Esophagus squamous epithelium (tissue), 5 donors: ENCODE measurements at regions of chr15 and their contacts with region 1.

Region 1: DNA sequence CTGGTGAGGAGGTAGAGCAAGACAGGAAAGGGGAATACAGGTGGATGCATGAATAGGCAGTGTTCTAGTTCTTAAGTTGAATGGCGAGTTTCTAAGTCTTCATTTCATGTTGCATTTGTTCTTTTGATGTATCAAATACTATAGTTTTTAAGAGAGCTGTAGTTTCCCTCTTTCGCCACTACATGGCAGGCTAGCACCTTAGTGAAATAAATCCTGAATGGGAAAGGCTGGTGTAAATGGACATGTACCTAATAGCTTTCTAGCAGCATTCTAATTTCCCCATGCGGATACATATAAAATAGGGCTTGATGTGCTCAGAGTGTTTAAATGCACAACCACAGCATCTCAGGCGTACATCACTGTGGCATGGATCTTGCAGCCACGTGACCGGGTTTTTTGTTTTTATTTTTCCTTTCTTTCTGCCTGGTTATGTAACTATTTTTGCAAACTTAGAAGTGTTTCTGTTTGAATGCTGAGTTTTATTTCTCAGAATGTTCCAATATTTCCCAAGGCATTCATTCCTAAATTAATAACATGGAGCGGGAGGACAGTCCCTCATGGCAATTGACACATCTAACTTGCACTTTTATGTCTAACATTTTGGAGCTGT is 23.5 kb upstream of the CLN6 start:
- DNase-seq: no peak
- H3K4me3 ChIP-seq: no peak overlapping the region
- H3K27ac ChIP-seq: no peak overlapping the region
- H3K4me1 ChIP-seq: peaks cover 0 to 31% (median 14%) of the 10 kb centered on the region in 3 donors
- H3K27me3 ChIP-seq: no peaks in the 10 kb centered on the region
- CTCF ChIP-seq: peak; percentile 68 to 94 (median 90)
- POLR2A ChIP-seq: no peak

Region 2: DNA sequence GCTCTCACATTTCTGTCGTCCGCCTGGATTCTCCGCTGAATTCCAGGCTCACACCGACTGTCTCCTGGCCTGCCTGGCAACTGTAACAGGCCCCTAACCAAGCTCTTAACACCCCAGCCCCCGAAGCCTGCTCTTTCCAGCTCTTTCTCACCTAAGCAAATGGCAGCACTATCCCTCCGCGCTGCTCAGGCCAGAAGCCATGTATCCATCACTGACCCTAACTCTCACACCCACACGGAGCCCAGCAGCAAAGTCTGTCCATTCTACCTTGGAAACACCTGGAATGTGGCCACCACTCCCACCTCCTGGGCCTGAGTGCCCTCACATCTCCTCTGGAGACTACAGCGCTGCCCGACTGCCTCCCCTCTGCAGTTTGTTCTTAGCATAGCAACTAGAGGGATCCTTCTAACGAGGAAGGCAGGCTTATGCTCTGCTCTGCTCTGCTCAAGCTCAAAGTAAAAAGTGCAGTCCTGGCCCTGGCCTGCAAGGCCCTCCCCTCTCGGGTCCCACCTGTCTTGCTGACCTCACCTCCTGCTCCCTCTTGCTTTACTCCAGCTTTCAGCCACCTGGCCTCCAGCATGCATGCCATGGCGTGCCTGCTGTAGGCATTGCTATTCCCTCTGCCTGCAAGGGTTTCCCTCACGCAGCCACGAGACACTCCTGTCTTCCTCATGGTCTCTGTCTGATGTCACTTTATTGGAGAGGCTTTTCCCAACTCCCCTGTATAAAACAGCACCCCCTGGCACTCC is 51.7 kb after region 1 on chr15:
- intact Hi-C with region 1: loop called (anchors 5 kb)
- DNase-seq: no peak
- H3K4me3 ChIP-seq: no peak overlapping the region
- H3K27ac ChIP-seq: no peak overlapping the region
- H3K4me1 ChIP-seq: peaks cover 2 to 18% (median 3%) of the 10 kb centered on the region in 3 donors
- H3K27me3 ChIP-seq: peaks cover 0 to 9% (median 0%) of the 10 kb centered on the region in 4 donors
- CTCF ChIP-seq: no peak
- POLR2A ChIP-seq: no peak

Region 3: DNA sequence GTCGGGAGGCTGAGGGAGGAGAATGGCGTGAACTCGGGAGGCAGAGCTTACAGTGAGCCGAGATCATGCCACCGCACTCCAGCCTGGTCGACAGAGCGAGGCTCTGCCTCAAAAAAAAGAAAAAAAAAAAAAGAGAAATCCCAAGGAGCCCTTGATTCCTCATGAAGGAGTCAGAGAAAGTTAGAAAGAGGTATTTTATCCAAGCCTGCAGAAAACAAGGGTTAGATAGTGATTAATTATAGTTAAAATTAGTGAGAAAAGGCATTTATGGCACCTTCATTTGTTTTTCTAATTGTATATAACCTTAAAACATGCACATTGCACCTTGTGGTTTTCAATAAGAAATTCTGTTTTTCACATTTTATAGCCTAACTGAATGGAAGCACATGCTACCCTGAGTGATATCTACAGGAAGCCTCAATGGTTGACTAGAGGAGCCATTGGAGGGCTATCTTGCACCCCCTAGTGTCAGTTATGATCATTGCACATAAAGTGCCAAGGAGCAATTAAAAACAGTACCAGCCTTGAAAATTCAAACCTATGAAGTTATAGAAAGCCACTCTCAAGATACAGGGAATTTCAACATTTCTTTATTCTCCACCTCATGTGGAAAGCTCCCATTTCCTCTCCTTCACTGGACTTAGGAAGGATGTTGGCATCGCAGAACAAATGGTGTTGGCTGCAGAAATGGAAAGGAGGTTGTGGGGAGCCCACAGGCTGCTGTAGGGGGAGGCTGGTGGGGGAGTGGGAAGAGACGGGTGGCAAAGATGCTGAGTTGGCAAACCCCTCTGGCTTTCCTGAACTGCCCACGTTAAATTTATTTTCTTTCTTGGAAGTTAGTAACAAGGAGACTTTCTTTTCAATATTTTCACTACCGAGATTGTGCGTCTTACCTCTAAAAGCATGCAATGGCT is 130.4 kb after region 1 on chr15:
- intact Hi-C with region 1: loop called (anchors 10 kb)
- DNase-seq: no peak
- H3K4me3 ChIP-seq: no peak overlapping the region
- H3K27ac ChIP-seq: no peak overlapping the region
- H3K4me1 ChIP-seq: peaks cover 0 to 5% (median 0%) of the 10 kb centered on the region in 3 donors
- H3K27me3 ChIP-seq: peaks cover 0 to 19% (median 0%) of the 10 kb centered on the region in 4 donors
- CTCF ChIP-seq: peak in 5 of 6 experiments; percentile 53 to 75 (median 72)
- POLR2A ChIP-seq: no peak